ENCODE measurements at regions of chr1 and their contacts with region 1.

Region 1: DNA sequence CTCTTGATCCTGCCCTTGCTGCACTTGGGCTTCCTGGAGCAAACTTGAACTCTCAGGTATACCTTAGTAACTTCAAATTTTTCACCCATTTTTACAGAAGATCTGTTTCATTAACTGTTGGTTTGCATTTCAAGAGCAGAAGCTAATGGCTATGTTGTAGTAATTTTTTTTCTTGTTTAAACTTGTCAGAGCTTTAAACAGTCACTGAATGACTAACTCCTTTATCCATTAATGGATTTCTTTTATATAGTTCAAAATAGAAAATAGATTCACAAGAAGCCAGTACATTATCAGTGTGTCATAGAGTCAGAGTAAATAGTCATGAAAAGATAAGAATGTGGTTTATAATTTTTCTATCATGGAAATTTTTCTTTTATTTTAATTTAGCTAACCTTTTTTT is 13.6 kb downstream of the SRSF11 start:
- H3K4me3 Mint-ChIP-seq: no peak overlapping the region
- H3K27ac Mint-ChIP-seq: no peak overlapping the region
- H3K4me1 Mint-ChIP-seq: no peaks in the 10 kb centered on the region
- H3K27me3 Mint-ChIP-seq: no peaks in the 10 kb centered on the region

Region 2: GRCh38 chr1:70188522-70188921 is 46.2 kb before region 1 on chr1:
- intact Hi-C with region 1: loop called (anchors 10 kb)
- H3K4me3 Mint-ChIP-seq: no peak overlapping the region
- H3K27ac Mint-ChIP-seq: no peak overlapping the region
- H3K4me1 Mint-ChIP-seq: no peaks in the 10 kb centered on the region
- H3K27me3 Mint-ChIP-seq: no peaks in the 10 kb centered on the region

Region 3: GRCh38 chr1:70247768-70248167 is 13.0 kb after region 1 on chr1:
- intact Hi-C with region 1: loop called (anchors 2 kb)
- H3K4me3 Mint-ChIP-seq: no peak overlapping the region
- H3K27ac Mint-ChIP-seq: no peak overlapping the region
- H3K4me1 Mint-ChIP-seq: no peaks in the 10 kb centered on the region
- H3K27me3 Mint-ChIP-seq: no peaks in the 10 kb centered on the region

Region 4: GRCh38 chr1:70290218-70290617 is 55.5 kb after region 1 on chr1:
- intact Hi-C with region 1: loop called (anchors 10 kb)
- H3K4me3 Mint-ChIP-seq: no peak overlapping the region
- H3K27ac Mint-ChIP-seq: no peak overlapping the region
- H3K4me1 Mint-ChIP-seq: peaks cover 5% of the 10 kb centered on the region
- H3K27me3 Mint-ChIP-seq: no peaks in the 10 kb centered on the region

Region 5: GRCh38 chr1:70764747-70765146 is 530.0 kb after region 1 on chr1:
- intact Hi-C with region 1: no loop called
- H3K4me3 Mint-ChIP-seq: no peak overlapping the region
- H3K27ac Mint-ChIP-seq: no peak overlapping the region
- H3K4me1 Mint-ChIP-seq: peaks cover 6% of the 10 kb centered on the region
- H3K27me3 Mint-ChIP-seq: no peaks in the 10 kb centered on the region

Region 6: DNA sequence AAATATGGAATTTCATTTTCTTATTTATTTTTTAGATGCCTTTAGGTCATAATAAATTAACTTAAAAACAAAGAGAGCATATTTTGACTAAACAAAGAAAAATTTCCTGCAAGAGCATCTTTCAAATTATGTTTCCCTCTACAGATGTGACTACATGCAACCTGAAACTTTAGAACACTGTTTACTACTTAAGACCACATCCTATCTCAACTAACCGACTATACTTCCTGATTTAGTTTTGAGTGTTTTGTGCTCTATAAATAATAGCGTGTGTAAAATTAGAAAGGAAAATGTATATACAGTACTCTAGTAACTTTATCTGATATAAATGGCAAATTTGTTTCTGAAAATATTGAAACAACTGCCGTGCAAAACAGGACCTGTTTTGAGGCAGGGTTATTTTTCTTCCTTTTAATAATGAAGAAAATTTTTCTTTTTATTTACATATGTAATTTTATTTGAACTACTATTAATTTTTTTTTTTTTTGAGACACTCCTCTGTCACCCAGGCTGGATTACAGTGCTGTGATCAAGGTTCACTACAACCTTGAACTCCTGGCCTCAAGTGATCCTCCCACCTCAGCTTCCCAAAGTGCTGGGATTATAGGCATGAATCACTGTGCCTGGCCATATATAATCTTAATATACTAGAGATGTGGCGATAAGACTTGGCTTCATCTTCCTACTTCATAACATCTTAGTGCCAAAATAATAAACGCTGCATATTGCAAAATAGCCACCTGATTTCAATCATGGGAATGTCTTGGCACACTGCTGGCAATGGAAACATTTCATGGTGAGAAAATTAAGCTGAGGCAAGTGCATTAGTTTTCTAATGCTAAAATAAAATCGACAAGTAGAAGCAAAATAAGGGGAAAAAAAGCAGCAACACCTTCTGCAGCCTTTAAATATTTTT is 833.9 kb after region 1 on chr1:
- intact Hi-C with region 1: loop called (anchors 5 kb)
- H3K4me3 Mint-ChIP-seq: no peak overlapping the region
- H3K27ac Mint-ChIP-seq: no peak overlapping the region
- H3K4me1 Mint-ChIP-seq: no peaks in the 10 kb centered on the region
- H3K27me3 Mint-ChIP-seq: no peaks in the 10 kb centered on the region

Region 7: DNA sequence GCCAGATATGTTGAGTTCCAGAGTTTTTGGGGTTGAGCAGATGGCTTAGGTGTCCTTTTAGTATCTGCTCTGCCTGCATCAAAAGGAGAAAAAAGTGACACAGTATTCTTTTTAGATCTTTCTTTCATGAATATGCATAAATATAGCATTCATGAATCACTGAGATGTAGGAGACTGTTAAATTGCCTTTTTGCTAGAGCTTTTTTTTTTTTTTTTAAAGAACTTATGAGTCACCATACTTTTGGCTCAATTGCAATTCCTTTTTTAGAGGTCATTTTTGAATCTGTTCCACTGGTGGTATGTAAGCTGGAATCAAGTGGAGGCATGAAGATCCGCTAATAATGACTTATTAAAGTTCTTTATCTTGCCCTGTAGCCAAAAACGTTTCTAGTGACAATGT is 1327.0 kb after region 1 on chr1:
- intact Hi-C with region 1: no loop called
- H3K4me3 Mint-ChIP-seq: no peak overlapping the region
- H3K27ac Mint-ChIP-seq: no peak overlapping the region
- H3K4me1 Mint-ChIP-seq: no peaks in the 10 kb centered on the region
- H3K27me3 Mint-ChIP-seq: no peaks in the 10 kb centered on the region

Measured in dendritic cell treated with granulocyte-macrophage colony-stimulating factor and Interleukin-4, amounts not matched to agents 40 ng/mL and 50 ng/mL, for 4 days (primary cell).